GM13976 (cell line): ENCODE measurements at regions of chr13 and their contacts with region 1.

Region 1: DNA sequence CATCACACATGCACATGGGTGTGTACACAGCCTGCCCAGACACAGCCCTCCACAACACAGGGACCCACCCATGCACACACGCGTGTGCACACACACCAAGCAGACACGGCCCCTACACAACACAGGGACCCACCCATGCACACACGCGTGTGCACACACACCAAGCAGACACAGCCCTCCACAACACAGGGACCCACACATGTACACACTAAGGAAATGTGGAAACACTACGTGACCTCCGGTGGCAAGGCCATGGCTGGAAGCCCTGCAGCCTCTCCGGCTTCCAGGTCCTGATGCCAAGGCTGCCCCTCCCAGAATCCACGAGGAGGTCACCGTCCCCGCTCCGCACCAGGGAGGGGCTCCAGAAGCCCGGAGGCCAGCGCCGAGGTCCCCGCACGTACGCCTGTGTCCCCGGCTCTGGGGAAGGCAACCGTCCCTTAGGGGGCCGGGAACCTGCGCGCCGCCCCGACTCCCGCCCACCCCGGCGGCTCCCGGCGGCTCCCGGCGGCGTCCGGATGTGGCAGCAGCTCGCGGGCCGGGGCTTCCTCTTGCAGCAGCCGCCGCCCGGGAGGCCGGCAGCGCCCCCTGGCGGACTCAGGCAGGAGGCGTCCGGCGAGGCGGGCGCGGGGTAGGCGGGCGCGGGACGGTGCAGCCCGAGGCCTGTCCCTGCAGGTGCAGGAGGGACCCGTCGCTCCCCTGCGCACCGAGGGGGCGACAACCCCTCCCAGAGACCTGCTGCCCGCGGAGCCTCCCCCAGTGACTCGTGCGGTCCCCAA is 29.8 kb upstream of the GRTP1 start:
- DNase-seq: peak; percentile 96
- CTCF ChIP-seq: peak; percentile 93

Region 2: DNA sequence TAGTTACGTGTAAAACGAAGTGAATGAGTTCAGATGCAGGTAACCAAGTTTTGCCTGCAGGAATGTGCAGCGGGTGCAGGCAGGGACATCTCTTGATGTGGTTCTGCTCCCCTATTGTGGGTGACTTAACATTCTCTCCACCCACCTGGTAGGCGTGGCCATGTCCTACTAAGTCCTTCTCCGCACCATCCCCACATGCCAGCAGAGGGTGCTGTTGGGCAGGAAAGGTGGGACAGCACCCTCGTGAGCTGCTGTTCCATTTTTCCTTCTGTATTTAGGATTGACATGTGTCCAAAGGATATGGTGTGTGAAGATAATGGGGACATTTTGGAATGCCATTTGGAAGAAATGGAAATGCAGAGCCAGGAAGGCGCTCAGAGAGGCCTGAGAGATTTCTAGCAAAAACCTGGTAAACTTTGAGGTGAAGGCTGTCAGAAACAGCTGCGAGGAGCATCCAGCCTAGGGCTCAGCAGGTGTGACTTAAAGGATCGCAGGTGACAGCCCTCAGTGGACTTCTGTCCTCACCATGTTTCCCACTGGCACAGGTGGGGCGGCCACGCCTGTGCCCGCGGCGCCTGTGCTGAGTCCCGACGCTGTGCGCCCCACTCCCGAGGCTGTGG is 451.0 kb before region 1 on chr13:
- in situ Hi-C with region 1: loop called (anchors 25 kb)
- DNase-seq: peak; percentile 93
- CTCF ChIP-seq: peak; percentile 92